ENCODE measurements at regions of chr14 and their contacts with region 1.

Region 1: DNA sequence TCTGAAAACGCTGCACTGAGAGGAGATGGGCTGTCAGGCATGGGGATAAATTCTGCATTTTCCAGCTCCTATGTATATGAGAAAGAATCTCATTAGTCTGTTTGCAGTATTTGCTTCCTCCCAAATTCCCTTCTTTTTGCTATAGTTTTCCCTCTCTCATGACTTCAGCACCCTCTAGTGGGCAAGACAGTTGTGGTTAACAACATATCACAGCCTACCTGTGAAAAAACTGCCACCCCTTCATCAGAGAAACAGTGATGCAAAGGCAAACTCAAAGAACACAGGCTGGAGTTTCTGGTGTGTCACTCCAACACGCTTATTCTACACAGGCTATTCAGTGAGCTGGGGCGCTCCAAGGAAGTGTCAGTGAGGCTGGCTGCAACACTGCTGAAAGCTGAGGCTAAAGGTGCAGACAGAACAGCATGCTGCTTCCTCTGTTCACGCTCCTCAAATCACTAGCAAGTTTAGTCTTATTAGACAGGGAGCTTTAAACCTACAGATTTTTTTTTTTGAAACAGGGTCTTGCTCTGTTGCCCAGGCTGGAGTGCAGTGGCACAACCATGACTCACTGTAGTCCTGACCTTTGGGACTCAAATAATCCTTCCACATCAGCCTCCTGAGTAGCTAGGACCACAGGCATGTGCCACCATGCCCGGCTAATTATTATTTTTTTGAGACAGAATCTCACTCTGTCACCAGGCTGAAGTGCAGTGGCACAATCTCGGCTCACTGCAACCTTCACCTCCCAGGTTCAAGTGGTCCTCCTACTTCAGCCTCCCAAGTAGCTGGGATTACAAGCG is 19.3 kb downstream of the ZC2HC1C start:
- DNase-seq: peak in 7 of 9 donors; percentile 27 to 55 (median 47)
- ATAC-seq: peak; percentile 67
- H3K4me3 ChIP-seq: no peak overlapping the region
- H3K4me3 Mint-ChIP-seq: no peak overlapping the region
- H3K27ac ChIP-seq: no peak overlapping the region
- H3K27ac Mint-ChIP-seq: peak overlapping the region in 1 of 9 donors; percentile 40
- H3K4me1 ChIP-seq: no peaks in the 10 kb centered on the region
- H3K4me1 Mint-ChIP-seq: no peaks in the 10 kb centered on the region
- H3K27me3 ChIP-seq: no peaks in the 10 kb centered on the region
- H3K27me3 Mint-ChIP-seq: no peaks in the 10 kb centered on the region

Region 2: DNA sequence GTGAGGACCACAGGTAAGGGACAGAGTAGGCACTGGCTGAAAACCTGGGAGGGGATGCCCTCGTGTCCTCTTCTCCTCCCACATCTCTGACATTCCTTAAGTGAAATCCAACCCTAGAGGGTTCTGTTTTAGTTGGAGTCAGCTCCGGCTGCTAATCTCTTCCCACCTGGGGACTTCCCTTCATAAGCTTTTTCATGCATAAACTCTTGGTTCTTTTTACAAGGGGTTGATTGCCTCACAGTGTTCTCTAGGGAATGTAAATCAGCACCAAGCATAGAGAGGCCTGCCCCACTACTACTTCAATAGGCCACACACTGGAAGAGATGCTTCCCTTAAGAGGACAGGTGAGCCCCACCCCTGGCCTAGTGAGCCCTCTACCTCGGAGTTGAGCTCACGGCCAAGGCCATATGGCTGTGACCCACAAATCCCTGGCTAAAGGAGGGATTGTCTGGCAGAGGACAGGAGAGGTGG is 659.5 kb before region 1 on chr14:
- CTCF ChIA-PET with region 1: no interaction called
- POLR2A ChIA-PET with region 1: no interaction called
- intact Hi-C with region 1: no loop called
- DNase-seq: no peak
- ATAC-seq: no peak
- H3K4me3 ChIP-seq: no peak overlapping the region
- H3K4me3 Mint-ChIP-seq: no peak overlapping the region
- H3K27ac ChIP-seq: no peak overlapping the region
- H3K27ac Mint-ChIP-seq: no peak overlapping the region
- H3K4me1 ChIP-seq: no peaks in the 10 kb centered on the region
- H3K4me1 Mint-ChIP-seq: peaks cover 0 to 8% (median 4%) of the 10 kb centered on the region in 7 donors
- H3K27me3 ChIP-seq: peaks cover 0 to 9% of the 10 kb centered on the region in 2 donors
- H3K27me3 Mint-ChIP-seq: peaks cover 36 to 57% (median 52%) of the 10 kb centered on the region in 5 donors

Region 3: DNA sequence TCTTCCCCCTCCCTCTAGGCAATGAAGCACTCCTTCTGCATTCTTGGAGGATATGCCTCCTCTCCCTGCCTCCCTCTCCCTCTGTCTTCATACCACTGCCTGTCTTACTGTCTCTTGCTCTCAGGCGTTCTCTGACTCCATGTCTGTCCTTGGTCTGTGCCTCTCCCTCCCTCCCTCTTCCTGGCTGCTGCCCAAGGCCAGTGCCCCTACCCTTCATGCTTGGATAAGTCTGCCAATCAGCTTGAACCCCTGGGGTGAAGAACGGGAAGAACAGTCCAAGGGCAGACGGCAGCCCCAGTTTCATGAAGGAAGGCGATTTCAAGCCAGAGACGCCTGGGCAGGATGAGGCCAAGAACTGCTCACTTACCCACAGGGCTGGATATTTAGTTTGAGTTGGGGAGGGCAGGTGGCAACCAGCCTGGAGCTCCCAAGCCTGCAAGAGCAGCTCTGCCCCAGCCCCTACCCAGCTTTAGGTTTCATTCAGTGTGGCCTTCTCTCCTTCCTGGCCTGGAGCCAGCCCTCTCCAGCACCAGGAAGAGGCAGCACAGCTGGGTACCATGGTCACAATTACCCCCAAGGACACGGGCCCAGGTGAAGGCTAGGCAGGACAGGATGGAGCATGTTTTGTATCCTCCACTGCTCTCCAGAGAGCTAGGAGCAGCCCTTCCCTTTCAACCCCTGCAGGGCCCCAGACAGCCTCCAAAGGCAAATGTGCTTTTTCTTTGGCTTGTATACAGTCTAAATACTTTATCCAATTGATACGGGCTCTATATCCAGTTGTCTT is 440.9 kb before region 1 on chr14:
- CTCF ChIA-PET with region 1: no interaction called
- POLR2A ChIA-PET with region 1: no interaction called
- intact Hi-C with region 1: no loop called
- DNase-seq: no peak
- ATAC-seq: no peak
- H3K4me3 ChIP-seq: no peak overlapping the region
- H3K4me3 Mint-ChIP-seq: no peak overlapping the region
- H3K27ac ChIP-seq: no peak overlapping the region
- H3K27ac Mint-ChIP-seq: no peak overlapping the region
- H3K4me1 ChIP-seq: peaks cover 0 to 8% of the 10 kb centered on the region in 2 donors
- H3K4me1 Mint-ChIP-seq: peaks cover 0 to 16% (median 8%) of the 10 kb centered on the region in 7 donors
- H3K27me3 ChIP-seq: no peaks in the 10 kb centered on the region
- H3K27me3 Mint-ChIP-seq: no peaks in the 10 kb centered on the region

Region 4: GRCh38 chr14:74913986-74914573 is 174.7 kb before region 1 on chr14:
- CTCF ChIA-PET with region 1: no interaction called
- POLR2A ChIA-PET with region 1: no interaction called
- intact Hi-C with region 1: loop called (anchors 1 kb)
- DNase-seq: no peak
- ATAC-seq: no peak
- H3K4me3 ChIP-seq: no peak overlapping the region
- H3K4me3 Mint-ChIP-seq: no peak overlapping the region
- H3K27ac ChIP-seq: no peak overlapping the region
- H3K27ac Mint-ChIP-seq: no peak overlapping the region
- H3K4me1 ChIP-seq: no peaks in the 10 kb centered on the region
- H3K4me1 Mint-ChIP-seq: peaks cover 0 to 3% (median 0%) of the 10 kb centered on the region in 7 donors
- H3K27me3 ChIP-seq: no peaks in the 10 kb centered on the region
- H3K27me3 Mint-ChIP-seq: no peaks in the 10 kb centered on the region

Region 5: GRCh38 chr14:75069045-75069810 is 19.5 kb before region 1 on chr14 and contains the start of gene ZC2HC1C:
- CTCF ChIA-PET with region 1: no interaction called
- POLR2A ChIA-PET with region 1: no interaction called
- intact Hi-C with region 1: no loop called
- DNase-seq: peak; percentile 11 to 82 (median 34)
- ATAC-seq: peak; percentile 85
- H3K4me3 ChIP-seq: peak within 1 kb of the TSS; percentile 69
- H3K4me3 Mint-ChIP-seq: peak within 1 kb of the TSS in 6 of 10 donors; percentile 36 to 82 (median 68)
- H3K27ac ChIP-seq: peak within 1 kb of the TSS; percentile 46
- H3K27ac Mint-ChIP-seq: peak within 1 kb of the TSS in 2 of 9 donors; percentile 15 to 81
- H3K4me1 ChIP-seq: peaks cover 7 to 8% of the 10 kb centered on the region in 2 donors
- H3K4me1 Mint-ChIP-seq: peaks cover 2 to 15% (median 6%) of the 10 kb centered on the region in 7 donors
- H3K27me3 ChIP-seq: no peaks in the 10 kb centered on the region
- H3K27me3 Mint-ChIP-seq: peaks cover 0 to 3% (median 0%) of the 10 kb centered on the region in 5 donors
- total RNA-seq, gene ZC2HC1C: 1.7 TPM in 1 of 5 experiments, not detected in the others